K562 (cell line): ENCODE measurements at regions of chr20 and their contacts with region 1.

Region 1: DNA sequence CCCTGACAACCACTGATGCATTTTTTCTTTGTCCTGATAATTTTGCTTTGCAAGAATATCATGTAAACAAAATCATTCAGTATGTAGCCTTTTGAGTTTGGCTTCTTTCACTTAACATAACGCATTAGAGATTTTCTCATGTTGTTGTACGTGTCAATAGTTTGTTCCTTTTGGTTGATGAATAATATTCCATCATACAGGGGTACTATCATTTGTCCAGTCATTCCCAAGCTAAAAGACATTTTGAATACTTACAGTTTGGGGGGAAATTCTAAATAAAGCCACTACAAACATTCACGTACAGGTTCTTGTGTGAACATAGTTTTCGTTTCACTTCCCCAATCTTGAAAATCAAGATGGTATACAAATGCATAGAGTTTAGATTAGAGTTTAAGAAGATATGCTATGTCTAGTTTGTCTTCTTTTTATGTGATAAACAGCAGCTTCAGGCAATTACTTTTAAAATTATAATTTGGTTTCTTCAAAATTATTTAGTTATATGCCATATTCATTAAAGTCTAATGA is 5.2 kb downstream of the HAO1 start:
- DNase-seq: no peak
- ATAC-seq: no peak
- H3K4me3 ChIP-seq: no peak overlapping the region
- H3K27ac ChIP-seq: no peak overlapping the region
- H3K4me1 ChIP-seq: no peaks in the 10 kb centered on the region
- H3K27me3 ChIP-seq: no peaks in the 10 kb centered on the region
- CTCF ChIP-seq: no peak
- EP300 ChIP-seq: no peak
- POLR2A ChIP-seq: no peak
- RAD21 ChIP-seq: no peak

Region 2: DNA sequence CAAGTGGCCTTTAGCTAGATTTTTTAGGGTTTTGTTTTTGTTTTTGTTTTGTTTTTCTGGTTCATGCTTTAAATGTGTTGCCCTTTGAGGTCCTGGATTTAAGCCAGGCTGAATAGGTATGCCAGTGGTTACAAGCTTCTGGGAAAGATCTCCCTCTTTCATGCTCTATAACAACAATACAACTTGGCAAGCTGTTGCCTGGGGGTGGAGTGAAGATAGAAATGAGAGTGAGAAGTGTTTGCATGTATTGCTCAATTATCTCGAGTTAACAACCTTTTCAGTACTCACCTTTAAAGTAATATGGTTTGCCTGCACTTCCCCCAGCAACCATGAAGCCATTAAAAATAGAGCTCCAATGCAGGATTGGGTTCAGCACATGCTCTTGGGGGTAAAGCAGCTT is 24.4 kb after region 1 on chr20:
- CTCF ChIA-PET with region 1: no interaction called
- POLR2A ChIA-PET with region 1: no interaction called
- in situ Hi-C with region 1: no loop called
- intact Hi-C with region 1: no loop called
- DNase-seq: no peak
- ATAC-seq: no peak
- H3K4me3 ChIP-seq: no peak overlapping the region
- H3K27ac ChIP-seq: no peak overlapping the region
- H3K4me1 ChIP-seq: no peaks in the 10 kb centered on the region
- H3K27me3 ChIP-seq: no peaks in the 10 kb centered on the region
- CTCF ChIP-seq: no peak
- EP300 ChIP-seq: no peak
- POLR2A ChIP-seq: no peak
- RAD21 ChIP-seq: no peak

Region 3: GRCh38 chr20:8033151-8033841 is 98.2 kb after region 1 on chr20:
- CTCF ChIA-PET with region 1: no interaction called
- POLR2A ChIA-PET with region 1: no interaction called
- in situ Hi-C with region 1: no loop called
- intact Hi-C with region 1: loop called (anchors 2 kb)
- DNase-seq: no peak
- ATAC-seq: no peak
- H3K4me3 ChIP-seq: no peak overlapping the region
- H3K27ac ChIP-seq: no peak overlapping the region
- H3K4me1 ChIP-seq: no peaks in the 10 kb centered on the region
- H3K27me3 ChIP-seq: no peaks in the 10 kb centered on the region
- CTCF ChIP-seq: no peak
- EP300 ChIP-seq: no peak
- POLR2A ChIP-seq: no peak
- RAD21 ChIP-seq: no peak